Spleen (tissue), 13 donors: ENCODE measurements at regions of chr1 and their contacts with region 1.

Region 1: GRCh38 chr1:173867753-173868265 is at the start of gene GAS5:
- DNase-seq: peak; percentile 100
- H3K4me3 ChIP-seq: peak within 1 kb of the TSS; percentile 75 to 95 (median 84)
- H3K27ac ChIP-seq: peak within 1 kb of the TSS; percentile 97 to 99 (median 98)
- H3K4me1 ChIP-seq: peaks cover 51 to 91% (median 71%) of the 10 kb centered on the region in 6 donors
- H3K27me3 ChIP-seq: no peaks in the 10 kb centered on the region
- CTCF ChIP-seq: peak in 2 of 11 experiments; percentile 6 to 29
- POLR2A ChIP-seq: peak; percentile 58 to 96 (median 89)
- total RNA-seq, gene GAS5: 287 to 382 (median 327) TPM

Region 2: GRCh38 chr1:173702736-173703135 is 165.1 kb before region 1 on chr1:
- intact Hi-C with region 1: no loop called
- DNase-seq: no peak
- H3K4me3 ChIP-seq: no peak overlapping the region
- H3K27ac ChIP-seq: no peak overlapping the region
- H3K4me1 ChIP-seq: no peaks in the 10 kb centered on the region
- H3K27me3 ChIP-seq: peaks cover 0 to 7% (median 0%) of the 10 kb centered on the region in 7 donors
- CTCF ChIP-seq: no peak
- POLR2A ChIP-seq: no peak

Region 3: DNA sequence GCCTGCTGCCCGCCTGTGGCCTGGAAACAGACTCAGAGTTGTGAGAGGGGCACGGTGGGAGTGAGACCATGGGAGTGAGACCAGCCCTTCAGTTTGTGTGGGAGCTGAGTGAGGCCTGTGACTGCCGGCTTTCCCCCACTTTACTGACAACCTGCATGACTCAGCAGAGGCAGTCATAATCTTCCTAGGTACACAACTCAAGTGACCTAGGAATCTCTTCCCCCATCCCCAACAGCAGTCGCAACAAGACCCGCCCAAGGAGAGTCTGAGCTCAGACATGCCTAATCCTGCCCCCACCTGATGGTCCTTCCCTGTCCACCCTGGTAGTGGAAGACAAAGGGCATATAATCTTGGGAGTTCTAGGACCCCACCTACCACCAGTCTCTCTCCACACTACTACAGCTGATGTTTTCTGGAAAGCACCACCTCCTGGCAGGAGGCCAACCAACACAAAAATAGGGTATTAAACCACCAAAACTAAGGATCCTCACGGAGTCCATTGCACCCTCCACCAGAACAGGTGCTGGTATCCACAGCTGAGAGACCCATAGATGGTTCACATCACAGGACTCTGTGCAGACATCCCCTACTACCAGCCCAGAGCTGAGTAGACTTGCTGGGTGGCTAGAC is 108.7 kb before region 1 on chr1:
- intact Hi-C with region 1: no loop called
- DNase-seq: no peak
- H3K4me3 ChIP-seq: no peak overlapping the region
- H3K27ac ChIP-seq: no peak overlapping the region
- H3K4me1 ChIP-seq: no peaks in the 10 kb centered on the region
- H3K27me3 ChIP-seq: no peaks in the 10 kb centered on the region
- CTCF ChIP-seq: no peak
- POLR2A ChIP-seq: no peak

Region 4: DNA sequence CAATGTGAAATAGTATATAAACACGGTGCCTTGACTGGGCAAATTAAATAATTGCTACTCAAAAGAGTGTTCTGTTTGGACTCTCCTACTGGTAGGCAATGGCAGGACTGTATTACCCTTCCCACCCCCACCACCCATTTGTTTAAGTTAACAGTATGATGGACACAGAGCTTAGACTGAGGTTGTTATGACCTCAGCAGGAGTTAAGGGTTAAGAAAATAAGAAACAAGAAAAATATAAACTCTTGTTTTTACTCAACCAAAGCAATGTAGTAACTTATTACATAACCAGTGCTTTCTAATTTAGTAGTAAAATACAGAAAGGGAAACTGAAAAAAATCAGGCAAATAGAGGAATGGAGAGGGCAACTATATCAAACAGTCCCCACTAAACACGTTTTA is 69.3 kb after region 1 on chr1:
- intact Hi-C with region 1: loop called (anchors 10 kb)
- DNase-seq: no peak
- H3K4me3 ChIP-seq: no peak overlapping the region
- H3K27ac ChIP-seq: no peak overlapping the region
- H3K4me1 ChIP-seq: no peaks in the 10 kb centered on the region
- H3K27me3 ChIP-seq: no peaks in the 10 kb centered on the region
- CTCF ChIP-seq: no peak
- POLR2A ChIP-seq: no peak

Region 5: GRCh38 chr1:173986951-173987350 is 119.1 kb after region 1 on chr1:
- intact Hi-C with region 1: no loop called
- DNase-seq: no peak
- H3K4me3 ChIP-seq: no peak overlapping the region
- H3K27ac ChIP-seq: no peak overlapping the region
- H3K4me1 ChIP-seq: no peaks in the 10 kb centered on the region
- H3K27me3 ChIP-seq: no peaks in the 10 kb centered on the region
- CTCF ChIP-seq: no peak
- POLR2A ChIP-seq: no peak